HepG2 (cell line): ENCODE measurements at regions of chr16 and their contacts with region 1.

Region 1: GRCh38 chr16:89700100-89700648 is 1.3 kb downstream of the SPATA2L start:
- DNase-seq: peak; percentile 99
- ATAC-seq: peak; percentile 59
- H3K4me3 ChIP-seq: peak overlapping the region; percentile 71 to 89 (median 84)
- H3K27ac ChIP-seq: peak overlapping the region; percentile 82
- H3K4me1 ChIP-seq: peaks cover 45% of the 10 kb centered on the region
- H3K27me3 ChIP-seq: no peaks in the 10 kb centered on the region
- CTCF ChIP-seq: peak; percentile 97
- EP300 ChIP-seq: peak in 1 of 2 experiments; percentile 53; a peak in 1 of 4 replicates
- POLR2A ChIP-seq: no peak
- RAD21 ChIP-seq: peak; percentile 96

Region 2: DNA sequence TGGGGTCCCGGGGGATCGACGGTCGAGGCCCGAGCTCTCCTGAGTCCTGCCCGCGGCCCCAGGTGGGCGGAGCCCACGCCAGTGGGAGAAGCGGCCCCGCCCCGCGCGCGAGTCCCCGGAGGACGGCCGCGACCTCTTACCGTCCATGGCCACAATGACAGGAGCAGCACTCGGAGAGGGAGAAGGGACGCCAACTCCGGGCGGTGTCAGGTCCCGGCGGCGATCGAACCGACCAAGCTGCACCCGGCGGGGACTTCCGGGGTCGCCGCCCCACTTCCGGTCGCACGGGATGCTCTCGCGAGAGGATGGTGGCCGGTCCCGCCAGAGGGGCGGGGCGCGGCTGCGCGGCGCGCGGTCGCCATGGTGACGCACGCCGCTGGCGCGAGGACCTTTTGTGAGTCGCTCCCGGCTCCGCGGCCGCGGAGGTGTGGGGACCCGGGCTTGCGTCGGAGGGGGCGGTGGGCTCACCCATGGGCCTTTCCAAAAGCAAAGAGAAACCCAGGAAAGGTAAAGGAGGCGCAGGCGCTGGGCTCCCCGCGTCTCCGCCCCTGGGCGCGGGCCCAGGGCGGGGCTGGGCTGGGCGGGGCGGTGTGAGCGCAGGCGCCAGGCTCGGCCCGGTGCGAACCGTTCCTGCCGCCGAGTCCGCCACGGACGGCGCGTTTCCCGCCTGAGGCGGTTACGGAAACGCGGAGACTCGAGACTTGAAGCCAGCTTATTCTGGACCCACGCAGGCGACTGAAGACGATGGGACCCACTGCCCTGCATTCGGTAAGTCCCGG is 42.5 kb before region 1 on chr16 and contains the starts of genes CHMP1A and SPATA33:
- CTCF ChIA-PET with region 1: interaction called, 3 read pairs
- POLR2A ChIA-PET with region 1: interaction called, 21 read pairs
- in situ Hi-C with region 1: loop called (anchors 5 kb)
- intact Hi-C with region 1: loop called (anchors 2 kb)
- DNase-seq: peak; percentile 78
- ATAC-seq: peak; percentile 93
- H3K4me3 ChIP-seq: peak within 1 kb of the TSS; percentile 91 to 100 (median 99)
- H3K27ac ChIP-seq: peak within 1 kb of the TSS; percentile 64
- H3K4me1 ChIP-seq: peaks cover 38% of the 10 kb centered on the region
- H3K27me3 ChIP-seq: no peaks in the 10 kb centered on the region; a peak in 1 of 5 replicates
- CTCF ChIP-seq: no peak; the same call in 1 of the 2 replicates
- EP300 ChIP-seq: no peak
- POLR2A ChIP-seq: peak; percentile 62 to 72
- RAD21 ChIP-seq: peak; percentile 49
- total RNA-seq, gene CHMP1A: 69.4 and 80.0 TPM in 2 replicates
- total RNA-seq, gene SPATA33: 11.0 and 11.2 TPM in 2 replicates

Region 3: GRCh38 chr16:89686520-89687091 is 13.6 kb before region 1 on chr16 and contains the start of gene CDK10:
- CTCF ChIA-PET with region 1: interaction called, 3 read pairs
- POLR2A ChIA-PET with region 1: interaction called, 32 read pairs
- in situ Hi-C with region 1: no loop called
- intact Hi-C with region 1: loop called (anchors 2 kb)
- DNase-seq: no peak
- ATAC-seq: no peak
- H3K4me3 ChIP-seq: peak within 1 kb of the TSS; percentile 22 to 50 (median 35); a peak in 5 of 6 replicates
- H3K27ac ChIP-seq: peak within 1 kb of the TSS; percentile 89
- H3K4me1 ChIP-seq: peaks cover 62% of the 10 kb centered on the region
- H3K27me3 ChIP-seq: no peaks in the 10 kb centered on the region
- CTCF ChIP-seq: no peak
- EP300 ChIP-seq: no peak
- POLR2A ChIP-seq: no peak
- RAD21 ChIP-seq: no peak
- total RNA-seq, gene CDK10: 1.2 and 2.5 TPM in 2 replicates

Region 4: GRCh38 chr16:89720813-89721545 is 20.8 kb after region 1 on chr16 and contains the starts of genes VPS9D1 and ZNF276:
- CTCF ChIA-PET with region 1: no interaction called
- POLR2A ChIA-PET with region 1: interaction called, 11 read pairs
- in situ Hi-C with region 1: no loop called
- intact Hi-C with region 1: no loop called
- DNase-seq: peak; percentile 65
- ATAC-seq: peak; percentile 77
- H3K4me3 ChIP-seq: peak within 1 kb of the TSS; percentile 72 to 89 (median 82)
- H3K27ac ChIP-seq: peak within 1 kb of the TSS; percentile 97
- H3K4me1 ChIP-seq: peaks cover 39% of the 10 kb centered on the region
- H3K27me3 ChIP-seq: no peaks in the 10 kb centered on the region; a peak in 1 of 5 replicates
- CTCF ChIP-seq: peak; percentile 30; the same call in 1 of the 2 replicates
- EP300 ChIP-seq: peak; percentile 46 to 59; a peak in 2 of 4 replicates
- POLR2A ChIP-seq: peak; percentile 63 to 78; a peak in 3 of 4 replicates
- RAD21 ChIP-seq: peak; percentile 51
- total RNA-seq, gene VPS9D1: 3.8 and 10.1 TPM in 2 replicates
- total RNA-seq, gene ZNF276: 6.8 and 17.7 TPM in 2 replicates

Region 5: DNA sequence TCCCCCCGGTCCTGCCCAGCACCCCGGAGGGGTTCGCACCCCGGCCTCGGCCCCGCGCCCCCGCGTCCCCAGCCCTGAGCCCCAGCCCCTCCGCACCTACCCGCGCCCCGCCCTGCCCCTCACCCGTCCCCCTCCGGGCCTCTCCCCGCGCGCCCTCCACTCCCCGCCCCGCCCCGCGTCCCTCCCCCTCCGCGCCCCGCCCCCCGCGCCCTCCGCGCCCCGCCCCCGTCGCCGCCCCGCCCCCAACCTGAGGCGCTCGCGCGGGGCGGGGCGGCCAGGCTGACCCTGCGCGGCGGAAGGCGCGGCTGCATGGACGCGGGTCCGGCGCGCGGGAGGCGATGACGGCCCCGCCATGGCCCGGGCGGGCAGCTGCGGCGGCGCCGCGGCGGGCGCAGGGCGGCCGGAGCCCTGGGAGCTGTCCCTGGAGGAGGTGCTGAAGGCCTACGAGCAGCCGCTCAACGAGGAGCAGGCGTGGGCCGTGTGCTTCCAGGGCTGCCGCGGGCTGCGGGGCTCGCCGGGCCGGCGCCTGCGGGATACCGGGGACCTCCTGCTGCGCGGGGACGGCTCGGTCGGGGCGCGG is 128.1 kb after region 1 on chr16 and contains the start of gene SPIRE2:
- CTCF ChIA-PET with region 1: no interaction called
- POLR2A ChIA-PET with region 1: interaction called, 5 read pairs
- in situ Hi-C with region 1: no loop called
- intact Hi-C with region 1: loop called (anchors 10 kb)
- DNase-seq: no peak
- ATAC-seq: peak; percentile 55
- H3K4me3 ChIP-seq: peak within 1 kb of the TSS; percentile 82 to 97 (median 94)
- H3K27ac ChIP-seq: peak within 1 kb of the TSS; percentile 94
- H3K4me1 ChIP-seq: peaks cover 69% of the 10 kb centered on the region
- H3K27me3 ChIP-seq: no peaks in the 10 kb centered on the region; a peak in 1 of 5 replicates
- CTCF ChIP-seq: no peak
- EP300 ChIP-seq: no peak
- POLR2A ChIP-seq: peak; percentile 29 to 65; a peak in 3 of 4 replicates
- RAD21 ChIP-seq: peak; percentile 79
- total RNA-seq, gene SPIRE2: 7.6 and 13.3 TPM in 2 replicates

Region 6: GRCh38 chr16:89880477-89881367 is 180.5 kb after region 1 on chr16:
- CTCF ChIA-PET with region 1: no interaction called
- POLR2A ChIA-PET with region 1: no interaction called
- in situ Hi-C with region 1: no loop called
- intact Hi-C with region 1: no loop called
- DNase-seq: no peak
- ATAC-seq: no peak
- H3K4me3 ChIP-seq: no peak overlapping the region
- H3K27ac ChIP-seq: no peak overlapping the region
- H3K4me1 ChIP-seq: peaks cover 3% of the 10 kb centered on the region; the same call in 1 of the 2 replicates
- H3K27me3 ChIP-seq: no peaks in the 10 kb centered on the region
- CTCF ChIP-seq: no peak
- EP300 ChIP-seq: no peak
- POLR2A ChIP-seq: no peak
- RAD21 ChIP-seq: no peak

Region 7: GRCh38 chr16:89917773-89918452 is 217.7 kb after region 1 on chr16:
- CTCF ChIA-PET with region 1: no interaction called
- POLR2A ChIA-PET with region 1: interaction called, 9 read pairs
- in situ Hi-C with region 1: no loop called
- intact Hi-C with region 1: loop called (anchors 5 kb)
- DNase-seq: peak; percentile 90
- ATAC-seq: peak; percentile 54
- H3K4me3 ChIP-seq: peak overlapping the region; percentile 45 to 90 (median 49)
- H3K27ac ChIP-seq: peak overlapping the region; percentile 77
- H3K4me1 ChIP-seq: peaks cover 83% of the 10 kb centered on the region
- H3K27me3 ChIP-seq: no peaks in the 10 kb centered on the region; a peak in 1 of 5 replicates
- CTCF ChIP-seq: peak; percentile 46; the same call in 1 of the 2 replicates
- EP300 ChIP-seq: peak; percentile 57 to 72
- POLR2A ChIP-seq: no peak; a peak in 1 of 4 replicates
- RAD21 ChIP-seq: no peak; the same call in none of the 2 replicates